ENCODE measurements at regions of chr1 and their contacts with region 1.

Region 1: GRCh38 chr1:186763107-186763506 is 65.6 kb upstream of the PLA2G4A start:
- DNase-seq: no peak
- ATAC-seq: no peak
- H3K4me3 ChIP-seq: no peak overlapping the region
- H3K27ac ChIP-seq: no peak overlapping the region
- H3K4me1 ChIP-seq: peaks cover 8% of the 10 kb centered on the region
- H3K27me3 ChIP-seq: no peaks in the 10 kb centered on the region
- CTCF ChIP-seq: no peak
- EP300 ChIP-seq: no peak
- POLR2A ChIP-seq: no peak
- RAD21 ChIP-seq: no peak

Region 2: GRCh38 chr1:186828611-186829454 is 65.7 kb after region 1 on chr1 and contains the start of gene PLA2G4A:
- CTCF ChIA-PET with region 1: no interaction called
- POLR2A ChIA-PET with region 1: no interaction called
- RAD21 ChIA-PET with region 1: no interaction called
- SMC1A ChIA-PET with region 1: no interaction called
- in situ Hi-C with region 1: no loop called
- intact Hi-C with region 1: loop called (anchors 10 kb)
- DNase-seq: no peak
- ATAC-seq: peak; percentile 57
- H3K4me3 ChIP-seq: peak within 1 kb of the TSS; percentile 68
- H3K27ac ChIP-seq: peak within 1 kb of the TSS; percentile 60
- H3K4me1 ChIP-seq: no peaks in the 10 kb centered on the region
- H3K27me3 ChIP-seq: no peaks in the 10 kb centered on the region
- CTCF ChIP-seq: no peak
- EP300 ChIP-seq: no peak
- POLR2A ChIP-seq: no peak
- RAD21 ChIP-seq: no peak
- polyA plus RNA-seq, gene PLA2G4A: 0.93 to 1.8 TPM